ENCODE measurements at regions of chr15 and their contacts with region 1.

Region 1: DNA sequence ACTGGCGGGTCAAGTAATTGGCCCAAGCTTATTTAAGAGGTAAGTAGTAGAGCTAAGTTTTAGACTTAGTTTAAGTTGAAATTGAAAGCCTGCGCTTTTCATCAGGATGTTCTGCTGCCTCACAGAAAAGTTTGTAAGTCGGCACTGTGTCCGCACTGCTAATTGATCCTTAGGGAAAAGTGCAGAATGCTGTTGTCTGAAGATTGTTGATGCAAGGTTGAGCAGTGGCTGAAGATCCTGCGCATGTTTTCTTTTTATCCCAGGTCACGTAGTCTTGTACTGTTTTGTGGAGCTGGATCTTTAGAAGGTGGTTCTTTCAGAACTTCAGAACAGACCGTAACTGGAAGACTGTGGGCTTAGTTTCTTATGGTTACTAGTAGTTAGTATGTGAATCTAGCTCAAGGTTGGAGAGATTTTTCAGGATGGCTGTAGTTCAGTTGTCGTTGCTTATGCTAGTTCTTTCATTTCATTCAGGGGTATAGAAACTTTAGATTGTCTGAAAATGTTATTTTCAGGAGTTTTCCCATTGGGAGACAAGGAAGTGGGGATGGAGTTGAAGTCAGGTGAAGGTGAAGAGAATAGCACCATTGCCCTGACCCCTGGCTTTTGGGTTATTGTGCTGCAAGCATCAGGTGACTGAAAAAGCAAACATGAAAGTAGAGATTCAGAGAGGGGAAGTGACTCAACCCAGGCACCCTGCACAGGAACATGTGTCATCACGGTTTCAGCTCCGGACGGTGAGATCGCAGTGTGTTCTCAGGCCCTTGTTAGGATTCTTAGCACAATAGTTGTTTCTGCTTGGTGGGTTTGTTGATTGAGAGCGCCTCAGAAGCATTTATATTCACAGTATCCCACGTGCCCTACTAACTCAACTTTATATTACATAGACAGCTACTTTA is 32.8 kb downstream of the AKAP13 start:
- DNase-seq: peak; percentile 40
- H3K4me3 ChIP-seq: no peak overlapping the region
- CTCF ChIP-seq: no peak

Region 2: GRCh38 chr15:85380812-85381642 is 32.2 kb before region 1 on chr15:
- CTCF ChIA-PET with region 1: interaction called, 10 read pairs
- POLR2A ChIA-PET with region 1: interaction called, 5 read pairs
- DNase-seq: no peak
- H3K4me3 ChIP-seq: peak overlapping the region; percentile 73
- CTCF ChIP-seq: no peak

Region 3: DNA sequence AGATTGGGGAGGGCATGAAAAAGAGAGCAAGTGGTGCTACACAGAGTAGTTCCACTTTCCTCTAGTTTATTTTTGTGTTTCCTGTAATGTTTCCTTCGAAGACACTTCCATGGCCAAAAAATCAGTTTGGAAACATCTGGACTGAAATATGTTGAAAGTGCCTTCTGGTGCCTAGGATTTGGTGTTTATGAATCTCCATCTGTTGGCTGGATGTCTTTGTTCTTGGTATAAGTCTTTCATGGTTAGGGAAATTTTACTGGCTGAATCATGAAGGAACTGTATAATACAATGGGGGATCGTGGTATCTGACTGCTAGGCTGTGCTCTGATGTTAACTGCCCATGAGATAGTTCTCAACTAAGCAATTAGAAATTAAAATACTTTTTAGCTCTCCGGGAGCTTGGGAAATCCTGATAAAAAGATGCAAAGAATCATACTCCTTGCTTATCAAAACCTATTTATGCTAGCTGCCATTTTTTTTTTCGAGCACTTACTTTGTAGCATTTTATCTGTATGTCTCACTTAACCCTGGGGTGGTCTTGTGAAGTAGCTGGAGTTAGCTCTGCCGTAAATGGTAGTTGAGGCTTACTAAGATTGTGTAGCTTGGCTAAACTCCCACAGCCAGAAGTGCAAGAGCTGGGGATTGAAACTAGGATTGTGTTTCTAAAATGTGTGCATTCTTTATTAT is 10.9 kb before region 1 on chr15:
- CTCF ChIA-PET with region 1: interaction called, 20 read pairs
- POLR2A ChIA-PET with region 1: interaction called, 3 read pairs
- DNase-seq: peak; percentile 52
- H3K4me3 ChIP-seq: no peak overlapping the region
- CTCF ChIP-seq: no peak